ENCODE measurements at regions of chr17 and their contacts with region 1.

Region 1: DNA sequence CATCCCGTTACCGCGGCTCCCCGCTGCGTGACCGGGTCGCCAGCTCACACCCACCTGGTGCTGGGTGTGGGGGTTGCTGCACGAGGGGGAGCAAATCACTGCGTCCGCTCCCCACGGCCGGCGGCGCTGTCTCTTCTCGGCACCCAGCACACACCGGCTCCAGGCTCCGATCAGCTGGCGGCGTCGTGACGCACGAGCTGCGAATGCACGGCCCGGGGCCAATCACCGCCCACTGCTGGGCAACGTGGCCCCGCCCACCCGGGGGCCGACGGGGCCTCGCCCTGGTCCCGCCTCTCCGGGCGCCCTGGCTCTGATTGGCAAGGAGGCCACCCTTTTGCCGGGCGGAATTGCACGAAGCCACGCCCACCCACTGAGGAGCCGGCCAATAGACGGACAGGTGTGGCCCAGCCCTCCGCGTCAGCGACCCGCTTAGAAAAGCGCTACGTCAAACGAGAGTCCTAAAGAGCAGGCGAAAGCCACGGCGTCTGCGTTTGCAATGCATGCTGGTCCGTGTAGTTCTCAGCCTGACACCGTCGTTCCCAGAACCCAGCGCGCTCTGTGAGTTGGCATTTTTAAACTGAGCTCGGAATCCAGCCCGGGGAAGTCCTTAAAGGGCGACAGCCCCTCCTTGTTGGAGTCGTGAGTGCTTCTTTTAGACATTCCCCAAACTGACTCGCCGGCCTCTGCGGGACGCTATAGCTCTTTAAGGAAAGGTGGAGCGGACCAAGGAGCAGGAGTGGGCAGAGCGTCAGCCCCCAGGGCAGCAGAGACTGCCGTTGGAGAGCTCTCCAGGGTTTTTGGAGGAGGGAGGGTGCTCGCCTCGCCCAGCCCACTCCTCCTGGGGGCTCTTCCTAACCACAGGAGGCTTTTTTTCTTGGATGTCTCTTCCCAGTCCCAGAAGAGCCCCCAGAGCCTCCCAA is 6.2 kb upstream of the TLCD2 start:
- DNase-seq: peak; percentile 100
- H3K4me3 ChIP-seq: peak overlapping the region; percentile 74 to 97 (median 87)
- H3K27ac ChIP-seq: peak overlapping the region; percentile 99 to 100 (median 100)
- H3K4me1 ChIP-seq: peaks cover 21 to 47% (median 36%) of the 10 kb centered on the region in 4 donors
- H3K27me3 ChIP-seq: no peaks in the 10 kb centered on the region
- CTCF ChIP-seq: peak in 1 of 5 experiments; percentile 30
- EP300 ChIP-seq: no peak
- POLR2A ChIP-seq: peak; percentile 100

Region 2: DNA sequence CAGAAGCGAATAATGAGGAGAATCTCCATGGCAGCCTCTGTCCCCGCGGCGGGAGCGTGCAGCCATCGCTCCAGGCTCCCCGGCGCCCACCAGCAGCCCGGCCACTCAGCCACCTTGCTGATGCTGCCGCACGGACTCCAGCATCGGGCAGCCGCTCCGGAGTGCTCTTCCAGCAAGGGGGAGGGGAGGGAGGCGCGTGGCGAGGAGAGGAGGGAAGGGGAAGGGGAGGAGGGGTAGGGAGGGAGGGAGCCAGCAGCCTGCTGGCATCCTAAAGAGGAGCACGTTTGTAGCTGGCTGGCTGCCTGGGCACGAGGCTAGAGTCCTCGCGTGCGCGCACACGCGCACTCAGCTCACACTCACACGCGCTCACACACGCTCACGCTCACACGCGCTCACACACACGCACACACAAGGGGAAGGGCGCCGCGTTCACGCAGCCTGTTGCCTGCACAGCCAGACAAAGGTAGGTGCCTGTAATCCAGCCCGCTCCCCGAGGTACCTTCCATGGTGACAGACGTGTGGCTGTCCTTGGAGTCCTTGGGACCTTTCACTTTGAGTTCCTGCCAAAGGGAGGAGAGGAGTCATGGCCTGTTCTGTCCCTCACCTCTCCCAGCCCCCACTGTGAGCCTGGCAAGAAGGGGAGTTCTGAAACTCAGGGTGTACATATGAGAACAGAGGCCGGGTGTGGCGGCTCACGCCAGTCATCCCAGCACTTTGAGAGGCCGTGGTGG is 637.3 kb before region 1 on chr17:
- in situ Hi-C with region 1: no loop called
- intact Hi-C with region 1: no loop called
- DNase-seq: no peak
- H3K4me3 ChIP-seq: no peak overlapping the region
- H3K27ac ChIP-seq: no peak overlapping the region
- H3K4me1 ChIP-seq: peaks cover 7 to 56% (median 42%) of the 10 kb centered on the region in 4 donors
- H3K27me3 ChIP-seq: no peaks in the 10 kb centered on the region
- CTCF ChIP-seq: no peak
- EP300 ChIP-seq: no peak
- POLR2A ChIP-seq: no peak

Region 3: DNA sequence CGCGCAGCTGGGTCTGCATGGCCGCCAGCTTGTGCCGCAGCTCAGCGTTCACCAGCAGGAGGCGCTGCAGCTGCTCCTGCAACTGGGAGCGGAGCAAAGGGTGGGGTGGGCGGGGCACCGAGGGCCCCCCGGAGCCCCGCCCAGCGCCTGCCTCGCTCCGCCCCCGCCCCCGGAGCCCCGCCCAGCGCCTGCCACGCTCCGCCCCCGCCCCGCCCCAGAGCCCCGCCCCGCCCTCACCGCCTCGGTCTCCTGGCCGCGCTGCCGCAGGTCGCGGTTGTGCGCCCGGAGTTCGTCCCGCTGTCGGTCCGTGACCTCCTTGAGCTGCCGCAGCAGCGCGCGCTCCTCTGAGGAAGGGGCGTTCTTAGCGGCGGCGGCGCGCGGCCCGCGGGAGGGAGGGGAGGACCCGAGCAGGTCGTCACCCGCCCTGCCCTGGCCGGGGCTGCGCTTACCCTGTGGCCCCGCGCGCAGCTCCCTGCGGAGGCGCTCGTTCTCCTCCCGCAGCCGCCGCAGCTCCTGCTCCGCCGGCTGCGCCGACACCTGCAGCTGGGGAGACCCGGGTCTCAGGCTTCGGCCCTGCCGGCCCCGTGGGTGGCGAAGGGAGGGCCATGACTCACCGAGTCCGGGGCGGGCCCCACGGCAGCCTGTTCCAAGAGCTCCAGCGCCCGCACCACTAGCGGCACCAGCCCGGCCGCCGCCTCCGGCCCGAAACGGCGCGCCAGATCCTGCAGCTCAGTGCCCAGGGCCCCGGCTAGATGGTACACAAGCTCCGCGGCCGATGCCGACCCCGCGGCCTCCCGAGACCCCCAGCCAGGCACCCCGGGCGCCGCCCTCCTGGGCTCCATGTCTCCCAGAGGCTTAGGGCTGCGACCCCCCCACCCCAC is 67.1 kb before region 1 on chr17:
- in situ Hi-C with region 1: no loop called
- intact Hi-C with region 1: loop called (anchors 10 kb)
- DNase-seq: peak; percentile 96
- H3K4me3 ChIP-seq: peak overlapping the region; percentile 62 to 88 (median 77)
- H3K27ac ChIP-seq: peak overlapping the region; percentile 97 to 100 (median 100)
- H3K4me1 ChIP-seq: peaks cover 24 to 37% (median 33%) of the 10 kb centered on the region in 4 donors
- H3K27me3 ChIP-seq: no peaks in the 10 kb centered on the region
- CTCF ChIP-seq: peak in 3 of 5 experiments; percentile 83 to 97 (median 90)
- EP300 ChIP-seq: no peak
- POLR2A ChIP-seq: peak; percentile 83

Region 4: DNA sequence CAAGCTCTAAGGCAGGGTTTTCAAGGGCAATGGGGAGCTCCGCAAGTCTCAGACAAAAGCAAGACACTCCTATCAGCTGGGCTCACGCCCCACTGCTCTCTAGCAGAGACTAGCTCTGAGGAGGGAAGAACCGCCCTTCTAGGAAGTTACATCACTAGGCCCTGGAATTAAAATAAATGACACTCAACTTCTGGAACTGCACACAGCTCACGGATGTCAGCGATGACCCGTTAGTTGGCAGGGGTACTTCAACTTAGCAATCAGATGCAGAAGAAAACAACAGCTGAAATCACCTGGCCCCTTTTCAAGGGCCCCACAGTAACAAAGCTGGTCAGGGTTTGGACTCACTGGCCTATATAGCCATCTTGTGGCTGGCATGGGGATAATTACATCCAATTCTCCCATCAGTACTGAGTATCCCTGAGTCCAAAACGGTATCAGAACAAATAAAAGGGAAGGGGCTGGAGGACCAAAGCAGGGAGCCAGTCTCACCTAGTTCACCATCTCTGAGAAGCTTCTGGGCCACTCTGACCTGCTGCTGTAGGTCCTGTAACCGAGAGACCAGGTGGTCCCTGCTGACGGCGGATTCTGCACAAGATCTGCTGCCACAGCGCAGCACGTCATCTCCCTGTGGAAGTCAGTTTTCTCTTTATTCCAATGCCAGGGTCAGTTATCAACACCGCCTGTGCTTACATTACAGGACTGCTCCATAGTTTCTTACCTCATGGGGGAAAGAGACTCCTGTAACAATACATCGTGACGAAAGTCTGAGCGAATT is 67.7 kb after region 1 on chr17:
- in situ Hi-C with region 1: loop called in 2 of 4 experiments (anchors 10 kb)
- intact Hi-C with region 1: loop called (anchors 5 kb)
- DNase-seq: peak; percentile 74
- H3K4me3 ChIP-seq: no peak overlapping the region
- H3K27ac ChIP-seq: peak overlapping the region; percentile 90 to 94 (median 92)
- H3K4me1 ChIP-seq: peaks cover 20 to 86% (median 47%) of the 10 kb centered on the region in 4 donors
- H3K27me3 ChIP-seq: no peaks in the 10 kb centered on the region
- CTCF ChIP-seq: peak; percentile 54 to 86 (median 63)
- EP300 ChIP-seq: peak; percentile 33
- POLR2A ChIP-seq: peak; percentile 58

Region 5: GRCh38 chr17:1813088-1813487 is 96.8 kb after region 1 on chr17:
- in situ Hi-C with region 1: loop called in 1 of 4 experiments (anchors 25 kb)
- intact Hi-C with region 1: no loop called
- DNase-seq: no peak
- H3K4me3 ChIP-seq: no peak overlapping the region
- H3K27ac ChIP-seq: no peak overlapping the region
- H3K4me1 ChIP-seq: no peaks in the 10 kb centered on the region
- H3K27me3 ChIP-seq: no peaks in the 10 kb centered on the region
- CTCF ChIP-seq: no peak
- EP300 ChIP-seq: no peak
- POLR2A ChIP-seq: no peak

Region 6: DNA sequence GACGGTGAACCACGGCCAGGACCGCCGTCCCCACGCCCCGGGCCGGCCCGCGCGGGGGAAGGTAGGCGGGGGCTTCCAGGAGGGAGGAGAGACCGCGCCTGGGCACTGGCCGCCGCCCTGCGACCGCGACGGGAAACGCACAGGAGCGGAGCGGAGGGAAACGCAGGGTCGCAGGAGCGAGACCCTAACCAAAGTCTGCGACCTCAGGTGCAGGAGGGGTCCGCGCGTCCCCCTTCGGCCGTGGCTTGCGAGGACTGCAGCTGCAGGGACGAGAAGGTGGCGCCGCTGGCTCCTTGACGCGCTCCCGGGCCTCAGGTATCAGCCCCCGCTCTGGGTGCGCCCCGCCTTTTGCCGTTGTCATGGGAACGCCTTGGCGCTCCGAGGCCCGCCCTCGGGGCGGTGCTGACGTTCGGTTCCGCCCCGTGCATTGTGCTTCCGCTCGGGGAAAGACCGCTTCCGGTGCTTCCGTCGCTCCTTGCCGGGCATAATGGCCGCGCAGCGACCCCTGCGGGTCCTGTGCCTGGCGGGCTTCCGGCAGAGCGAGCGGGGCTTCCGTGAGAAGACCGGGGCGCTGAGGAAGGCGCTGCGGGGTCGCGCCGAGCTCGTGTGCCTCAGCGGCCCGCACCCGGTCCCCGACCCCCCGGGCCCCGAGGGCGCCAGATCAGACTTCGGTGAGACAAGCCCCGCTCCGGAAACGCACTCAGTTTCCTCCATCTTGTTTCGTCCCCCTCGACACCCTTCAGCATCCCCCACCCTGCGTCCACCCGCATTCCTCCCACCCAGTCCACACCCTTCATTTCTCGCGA is 325.4 kb after region 1 on chr17 and contains the start of gene OVCA2:
- in situ Hi-C with region 1: loop called in 1 of 4 experiments (anchors 25 kb)
- intact Hi-C with region 1: no loop called
- DNase-seq: peak; percentile 96
- H3K4me3 ChIP-seq: peak within 1 kb of the TSS; percentile 56 to 91 (median 75)
- H3K27ac ChIP-seq: peak within 1 kb of the TSS; percentile 81 to 94 (median 91)
- H3K4me1 ChIP-seq: peaks cover 8 to 20% (median 15%) of the 10 kb centered on the region in 4 donors
- H3K27me3 ChIP-seq: no peaks in the 10 kb centered on the region
- CTCF ChIP-seq: peak; percentile 16 to 44 (median 36)
- EP300 ChIP-seq: no peak
- POLR2A ChIP-seq: peak; percentile 77
- total RNA-seq, gene OVCA2: 5.4 to 73.3 (median 36.9) TPM

Measured in transverse colon (tissue), 4 donors.